Activated naive CD4-positive, alpha-beta T cell treated with anti-CD3 and anti-CD28 coated beads for 36 hours (primary cell): ENCODE measurements at regions of chrX and their contacts with region 1.

Region 1: GRCh38 chrX:96684339-96685209 is at the start of gene DIAPH2:
- DNase-seq: peak; percentile 81
- H3K4me3 Mint-ChIP-seq: peak within 1 kb of the TSS; percentile 85
- H3K27ac Mint-ChIP-seq: peak within 1 kb of the TSS; percentile 89
- H3K4me1 Mint-ChIP-seq: peaks cover 26% of the 10 kb centered on the region
- H3K27me3 Mint-ChIP-seq: no peaks in the 10 kb centered on the region
- total RNA-seq, gene DIAPH2: 9.3 to 9.4 TPM

Region 2: GRCh38 chrX:96094616-96095015 is 590.0 kb before region 1 on chrX:
- CTCF ChIA-PET with region 1: no interaction called
- intact Hi-C with region 1: no loop called
- DNase-seq: no peak
- H3K4me3 Mint-ChIP-seq: no peak overlapping the region
- H3K27ac Mint-ChIP-seq: no peak overlapping the region
- H3K4me1 Mint-ChIP-seq: no peaks in the 10 kb centered on the region
- H3K27me3 Mint-ChIP-seq: no peaks in the 10 kb centered on the region

Region 3: GRCh38 chrX:96707804-96708203 is 23.2 kb after region 1 on chrX:
- CTCF ChIA-PET with region 1: no interaction called
- intact Hi-C with region 1: no loop called
- DNase-seq: no peak
- H3K4me3 Mint-ChIP-seq: no peak overlapping the region
- H3K27ac Mint-ChIP-seq: no peak overlapping the region
- H3K4me1 Mint-ChIP-seq: no peaks in the 10 kb centered on the region
- H3K27me3 Mint-ChIP-seq: no peaks in the 10 kb centered on the region

Region 4: DNA sequence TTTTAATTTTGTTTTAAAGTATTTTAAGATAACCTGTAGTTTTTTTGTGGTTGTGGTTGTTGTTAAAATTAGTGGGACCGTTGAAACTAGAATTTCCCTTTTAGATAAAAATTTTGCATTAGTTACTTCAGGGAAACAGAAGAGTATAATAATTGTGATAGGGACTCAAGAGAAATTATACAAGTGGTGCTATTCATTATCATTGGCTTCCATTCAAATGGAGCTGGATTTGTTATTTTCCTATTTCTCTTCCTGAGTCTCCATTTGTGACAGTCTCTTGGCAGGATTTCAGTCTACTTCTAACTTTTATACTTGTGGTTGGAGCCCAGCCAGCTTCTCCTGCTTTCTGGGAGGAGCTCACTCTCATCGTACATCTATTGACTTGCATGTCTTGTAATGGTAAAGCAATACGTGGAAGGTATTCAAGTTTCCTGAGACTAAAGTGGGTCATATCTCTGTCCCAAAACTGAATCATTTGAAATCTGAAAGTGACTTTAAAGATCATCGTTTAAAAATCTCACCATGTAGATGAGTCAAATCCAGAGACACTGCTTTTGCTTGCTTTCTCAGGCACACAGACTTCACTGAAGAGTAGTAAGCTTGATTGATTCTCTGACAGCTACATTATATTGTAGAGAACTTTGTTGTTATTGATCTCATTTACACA is 354.9 kb after region 1 on chrX:
- CTCF ChIA-PET with region 1: no interaction called
- intact Hi-C with region 1: loop called (anchors 10 kb)
- DNase-seq: peak; percentile 27
- H3K4me3 Mint-ChIP-seq: no peak overlapping the region
- H3K27ac Mint-ChIP-seq: no peak overlapping the region
- H3K4me1 Mint-ChIP-seq: peaks cover 4% of the 10 kb centered on the region
- H3K27me3 Mint-ChIP-seq: no peaks in the 10 kb centered on the region

Region 5: DNA sequence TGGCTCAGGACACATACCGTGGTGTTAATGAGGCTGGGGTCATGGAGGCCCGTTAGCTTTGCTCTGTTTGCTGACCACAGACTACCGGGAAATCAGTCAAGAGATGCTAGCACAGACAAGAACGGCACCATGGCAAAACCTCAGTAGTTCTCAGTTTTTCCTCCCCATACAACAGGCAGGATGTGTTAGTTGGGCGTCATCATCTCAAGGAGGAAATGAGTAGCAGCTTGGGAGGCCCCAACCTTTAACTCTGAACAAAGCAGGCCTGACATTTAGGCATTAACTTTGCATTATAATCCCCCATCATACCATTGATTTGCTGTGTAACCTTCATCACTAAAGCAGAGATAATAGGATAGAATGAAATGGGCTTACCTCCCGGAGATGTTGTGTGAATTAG is 913.4 kb after region 1 on chrX:
- CTCF ChIA-PET with region 1: no interaction called
- intact Hi-C with region 1: loop called (anchors 10 kb)
- DNase-seq: peak; percentile 46
- H3K4me3 Mint-ChIP-seq: peak overlapping the region; percentile 19
- H3K27ac Mint-ChIP-seq: peak overlapping the region; percentile 77
- H3K4me1 Mint-ChIP-seq: peaks cover 8% of the 10 kb centered on the region
- H3K27me3 Mint-ChIP-seq: no peaks in the 10 kb centered on the region